ENCODE measurements at regions of chr9 and their contacts with region 1.

Region 1: GRCh38 chr9:88988796-88989560 is 2.3 kb upstream of the S1PR3 start:
- DNase-seq: peak; percentile 75
- H3K4me3 Mint-ChIP-seq: peak overlapping the region; percentile 74
- H3K27ac Mint-ChIP-seq: peak overlapping the region; percentile 83
- H3K4me1 Mint-ChIP-seq: peaks cover 22% of the 10 kb centered on the region
- H3K27me3 Mint-ChIP-seq: peaks cover 41% of the 10 kb centered on the region

Region 2: GRCh38 chr9:88835038-88835466 is 153.9 kb before region 1 on chr9:
- intact Hi-C with region 1: loop called (anchors 5 kb)
- DNase-seq: peak; percentile 69
- H3K4me3 Mint-ChIP-seq: no peak overlapping the region
- H3K27ac Mint-ChIP-seq: peak overlapping the region; percentile 54
- H3K4me1 Mint-ChIP-seq: peaks cover 9% of the 10 kb centered on the region
- H3K27me3 Mint-ChIP-seq: peaks cover 68% of the 10 kb centered on the region

Region 3: GRCh38 chr9:88953381-88954029 is 35.5 kb before region 1 on chr9:
- intact Hi-C with region 1: loop called (anchors 5 kb)
- DNase-seq: no peak
- H3K4me3 Mint-ChIP-seq: no peak overlapping the region
- H3K27ac Mint-ChIP-seq: no peak overlapping the region
- H3K4me1 Mint-ChIP-seq: peaks cover 8% of the 10 kb centered on the region
- H3K27me3 Mint-ChIP-seq: peaks cover 6% of the 10 kb centered on the region

Region 4: GRCh38 chr9:88975966-88976889 is 12.8 kb before region 1 on chr9:
- intact Hi-C with region 1: loop called (anchors 1 kb)
- DNase-seq: no peak
- H3K4me3 Mint-ChIP-seq: peak overlapping the region; percentile 10
- H3K27ac Mint-ChIP-seq: peak overlapping the region; percentile 26
- H3K4me1 Mint-ChIP-seq: peaks cover 10% of the 10 kb centered on the region
- H3K27me3 Mint-ChIP-seq: peaks cover 12% of the 10 kb centered on the region

Region 5: DNA sequence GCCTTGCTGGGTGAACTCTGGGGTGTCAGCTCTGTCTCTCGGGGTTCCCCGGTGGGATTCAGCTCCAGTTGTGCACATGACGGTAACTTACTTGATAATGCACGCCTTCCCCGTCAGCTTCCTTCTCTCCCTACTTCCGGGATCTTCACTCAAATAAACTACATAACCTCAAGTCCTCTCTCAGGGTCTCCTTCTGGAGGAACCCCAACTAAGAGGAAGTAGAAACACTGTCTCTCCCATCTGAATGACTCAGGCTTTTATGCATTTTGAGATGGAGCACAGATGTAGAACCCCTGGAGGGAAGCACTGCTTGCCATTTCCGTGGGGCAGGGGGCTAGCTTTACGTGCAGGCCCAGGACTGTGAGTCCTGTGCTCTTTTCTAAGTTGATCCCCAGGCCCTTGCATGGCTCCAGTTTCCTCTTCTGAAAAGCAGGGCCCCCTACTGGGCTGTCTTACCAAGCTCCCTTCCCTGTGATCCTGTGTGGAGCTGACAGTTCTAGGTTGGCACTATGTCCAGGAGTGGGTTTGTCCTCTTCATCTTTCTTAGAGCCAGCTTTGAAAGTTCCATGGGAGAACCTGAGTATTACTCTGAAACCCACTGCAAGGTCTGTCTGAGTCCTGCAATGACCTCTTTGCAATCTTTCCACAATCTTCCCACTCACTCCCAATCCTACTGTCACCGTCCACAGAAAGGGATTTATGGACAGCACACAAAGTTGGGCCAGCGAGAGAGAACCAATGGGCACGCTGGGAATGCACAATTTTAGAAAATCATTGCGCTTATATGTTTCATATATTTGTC is 20.0 kb after region 1 on chr9:
- intact Hi-C with region 1: no loop called
- DNase-seq: no peak
- H3K4me3 Mint-ChIP-seq: no peak overlapping the region
- H3K27ac Mint-ChIP-seq: no peak overlapping the region
- H3K4me1 Mint-ChIP-seq: no peaks in the 10 kb centered on the region
- H3K27me3 Mint-ChIP-seq: peaks cover 9% of the 10 kb centered on the region

Region 6: DNA sequence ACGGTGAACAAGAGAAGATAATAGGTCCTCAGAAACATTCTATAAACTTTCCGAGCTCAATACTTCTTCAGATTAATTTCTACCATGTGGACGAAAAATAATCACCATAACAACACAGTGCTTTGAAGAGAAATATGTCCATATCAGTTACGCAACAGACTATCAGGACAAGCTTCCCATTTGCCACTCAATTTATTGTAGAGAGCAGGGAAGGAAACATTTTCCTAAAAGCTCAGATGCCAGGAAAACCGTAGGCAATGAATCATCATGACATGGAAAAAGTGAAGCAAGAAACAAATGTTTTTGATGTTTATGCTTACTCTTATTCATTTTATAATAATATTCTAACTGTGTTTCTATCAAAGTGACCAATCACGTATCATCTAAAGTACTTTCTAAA is 89.9 kb after region 1 on chr9:
- intact Hi-C with region 1: no loop called
- DNase-seq: no peak
- H3K4me3 Mint-ChIP-seq: no peak overlapping the region
- H3K27ac Mint-ChIP-seq: no peak overlapping the region
- H3K4me1 Mint-ChIP-seq: no peaks in the 10 kb centered on the region
- H3K27me3 Mint-ChIP-seq: peaks cover 15% of the 10 kb centered on the region

Region 7: GRCh38 chr9:89340332-89340731 is 351.4 kb after region 1 on chr9:
- intact Hi-C with region 1: no loop called
- DNase-seq: no peak
- H3K4me3 Mint-ChIP-seq: peak overlapping the region; percentile 20
- H3K27ac Mint-ChIP-seq: peak overlapping the region; percentile 73
- H3K4me1 Mint-ChIP-seq: peaks cover 29% of the 10 kb centered on the region
- H3K27me3 Mint-ChIP-seq: no peaks in the 10 kb centered on the region